GM12878 (cell line): ENCODE measurements at regions of chr19 and their contacts with region 1.

Region 1: GRCh38 chr19:14136509-14137281 is at the start of gene ASF1B:
- DNase-seq: peak; percentile 99
- ATAC-seq: peak; percentile 93
- H3K4me3 ChIP-seq: peak within 1 kb of the TSS; percentile 98
- H3K27ac ChIP-seq: peak within 1 kb of the TSS; percentile 79
- H3K4me1 ChIP-seq: 0 out of 2 replicates have a peak, but pooled peaks cover 8% of the 10 kb centered on the region
- H3K27me3 ChIP-seq: no peaks in the 10 kb centered on the region
- CTCF ChIP-seq: peak; percentile 84 to 98 (median 95)
- EP300 ChIP-seq: no peak
- POLR2A ChIP-seq: peak; percentile 98
- RAD21 ChIP-seq: peak; percentile 91
- polyA plus RNA-seq, gene ASF1B: 10.4 to 23.1 TPM

Region 2: DNA sequence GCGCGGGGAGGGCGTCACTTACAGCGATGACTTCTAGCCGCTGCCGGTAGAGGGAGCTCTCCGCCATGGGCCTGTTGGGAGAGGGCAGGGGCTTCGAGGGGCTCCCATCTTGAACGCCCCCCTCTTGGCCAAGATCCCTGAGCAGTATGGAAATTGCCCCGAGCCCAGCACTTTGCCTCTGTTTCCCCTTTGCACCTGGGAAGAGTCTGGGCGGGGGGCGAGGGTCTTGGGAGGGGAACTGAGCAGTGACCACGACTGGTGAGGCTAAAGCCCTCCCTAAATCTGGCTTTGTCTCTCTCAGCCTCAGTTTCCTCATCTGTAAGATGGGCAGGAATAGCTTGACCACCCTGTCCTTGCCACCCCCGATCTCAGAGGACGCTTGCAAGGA is 77.6 kb before region 1 on chr19:
- CTCF ChIA-PET with region 1: interaction called, 29 read pairs
- POLR2A ChIA-PET with region 1: no interaction called
- RAD21 ChIA-PET with region 1: interaction called, 4 read pairs
- SMC1A ChIA-PET with region 1: interaction called, 7 read pairs
- in situ Hi-C with region 1: no loop called
- intact Hi-C with region 1: no loop called
- DNase-seq: no peak
- ATAC-seq: peak; percentile 72
- H3K4me3 ChIP-seq: no peak overlapping the region
- H3K27ac ChIP-seq: no peak overlapping the region
- H3K4me1 ChIP-seq: no peaks in the 10 kb centered on the region
- H3K27me3 ChIP-seq: peaks cover 0 to 6% of the 10 kb centered on the region in 2 experiments
- CTCF ChIP-seq: peak; percentile 63 to 87 (median 75)
- EP300 ChIP-seq: no peak
- POLR2A ChIP-seq: no peak
- RAD21 ChIP-seq: peak; percentile 36; the same call in 1 of the 2 replicates

Region 3: GRCh38 chr19:14117668-14118164 is 19.0 kb before region 1 on chr19 and contains the start of gene PRKACA:
- CTCF ChIA-PET with region 1: interaction called, 19 read pairs
- POLR2A ChIA-PET with region 1: interaction called, 8 read pairs
- RAD21 ChIA-PET with region 1: interaction called, 14 read pairs
- SMC1A ChIA-PET with region 1: interaction called, 8 read pairs
- in situ Hi-C with region 1: no loop called
- intact Hi-C with region 1: no loop called
- DNase-seq: peak; percentile 91
- ATAC-seq: peak; percentile 99
- H3K4me3 ChIP-seq: peak within 1 kb of the TSS; percentile 70
- H3K27ac ChIP-seq: peak within 1 kb of the TSS; percentile 45
- H3K4me1 ChIP-seq: peaks cover 16% of the 10 kb centered on the region
- H3K27me3 ChIP-seq: no peaks in the 10 kb centered on the region
- CTCF ChIP-seq: no peak
- EP300 ChIP-seq: no peak
- POLR2A ChIP-seq: peak; percentile 54; the same call in 1 of the 2 replicates
- RAD21 ChIP-seq: no peak
- polyA plus RNA-seq, gene PRKACA: 0.53 to 1.3 TPM

Region 4: DNA sequence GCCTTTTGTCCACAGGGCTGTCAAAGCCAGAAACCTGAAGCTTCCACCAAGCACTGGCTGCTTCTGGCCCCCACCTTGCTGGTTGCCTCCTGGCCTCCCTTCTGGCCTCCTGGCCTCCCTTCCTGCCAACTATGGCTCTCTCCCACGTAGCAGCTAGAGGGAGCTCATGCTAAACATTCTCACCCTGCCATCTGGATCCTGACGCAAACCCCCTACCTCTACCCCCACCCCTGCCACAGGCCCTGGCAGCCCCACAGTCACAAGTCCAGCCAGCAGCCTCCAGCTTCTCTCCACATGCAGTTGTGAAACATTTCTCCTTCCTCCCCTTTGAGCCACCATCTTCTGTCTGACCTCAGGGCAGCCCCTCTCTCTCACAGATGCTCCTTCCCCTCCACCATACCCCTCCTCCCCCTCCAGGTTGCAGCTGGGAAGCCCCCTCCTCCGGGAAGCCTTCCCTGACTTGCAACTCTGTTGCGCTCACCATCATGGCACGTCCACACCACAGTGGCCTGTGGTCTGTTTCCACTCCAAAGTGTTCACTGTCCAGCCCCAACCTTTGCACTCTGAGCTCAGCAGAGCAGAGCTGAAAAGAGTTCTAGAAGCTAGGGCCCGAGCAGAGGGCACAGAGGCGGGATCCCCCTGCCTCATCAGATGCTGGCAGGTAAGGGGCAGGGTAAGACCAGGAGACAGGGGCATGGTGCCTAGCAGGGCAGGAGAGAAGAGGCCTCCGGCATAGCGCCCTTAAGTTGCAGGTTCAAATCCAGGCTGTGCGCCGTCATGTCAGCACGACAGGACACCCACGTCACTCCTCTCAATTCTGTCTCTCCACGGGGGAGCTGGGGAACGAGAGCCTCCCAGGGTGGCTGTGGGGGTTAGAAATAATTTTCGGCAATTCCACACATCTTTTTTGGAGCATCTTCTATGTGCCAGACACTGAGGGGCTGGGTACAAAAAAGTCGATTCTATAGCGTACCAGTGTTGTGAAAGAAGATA is 62.0 kb after region 1 on chr19:
- CTCF ChIA-PET with region 1: interaction called, 22 read pairs
- POLR2A ChIA-PET with region 1: no interaction called
- RAD21 ChIA-PET with region 1: interaction called, 8 read pairs
- SMC1A ChIA-PET with region 1: interaction called, 3 read pairs
- in situ Hi-C with region 1: no loop called
- intact Hi-C with region 1: no loop called
- DNase-seq: no peak
- ATAC-seq: peak; percentile 20; the same call in 2 of the 3 replicates
- H3K4me3 ChIP-seq: no peak overlapping the region
- H3K27ac ChIP-seq: no peak overlapping the region
- H3K4me1 ChIP-seq: no peaks in the 10 kb centered on the region; the same call in 1 of the 2 replicates
- H3K27me3 ChIP-seq: no peaks in the 10 kb centered on the region
- CTCF ChIP-seq: peak in 2 of 3 experiments; percentile 8 to 25; a peak in 1 of 6 replicates
- EP300 ChIP-seq: no peak
- POLR2A ChIP-seq: no peak
- RAD21 ChIP-seq: no peak

Region 5: GRCh38 chr19:14405758-14406644 is 269.3 kb after region 1 on chr19:
- CTCF ChIA-PET with region 1: interaction called, 4 read pairs
- POLR2A ChIA-PET with region 1: no interaction called
- RAD21 ChIA-PET with region 1: interaction called, 8 read pairs
- SMC1A ChIA-PET with region 1: no interaction called
- in situ Hi-C with region 1: no loop called
- intact Hi-C with region 1: loop called (anchors 5 kb)
- DNase-seq: peak; percentile 48
- ATAC-seq: peak; percentile 86
- H3K4me3 ChIP-seq: no peak overlapping the region
- H3K27ac ChIP-seq: no peak overlapping the region
- H3K4me1 ChIP-seq: peaks cover 3% of the 10 kb centered on the region; the same call in 1 of the 2 replicates
- H3K27me3 ChIP-seq: no peaks in the 10 kb centered on the region
- CTCF ChIP-seq: peak; percentile 66 to 94 (median 89)
- EP300 ChIP-seq: no peak
- POLR2A ChIP-seq: peak; percentile 57
- RAD21 ChIP-seq: peak; percentile 94